Activated T-helper 1 cell treated with anti-CD3 and anti-CD28 coated beads, Interleukin-12 subunit alpha, Interleukin-12 subunit beta, Interleukin-2, Interleukin-4 antibody, amounts not matched to agents 30 ng/mL and 10 ng/mL and 1 ng/mL, durations not matched to agents 14 hours and 24 hours and 36 hours (primary cell): ENCODE measurements at regions of chr12 and their contacts with region 1.

Region 1: DNA sequence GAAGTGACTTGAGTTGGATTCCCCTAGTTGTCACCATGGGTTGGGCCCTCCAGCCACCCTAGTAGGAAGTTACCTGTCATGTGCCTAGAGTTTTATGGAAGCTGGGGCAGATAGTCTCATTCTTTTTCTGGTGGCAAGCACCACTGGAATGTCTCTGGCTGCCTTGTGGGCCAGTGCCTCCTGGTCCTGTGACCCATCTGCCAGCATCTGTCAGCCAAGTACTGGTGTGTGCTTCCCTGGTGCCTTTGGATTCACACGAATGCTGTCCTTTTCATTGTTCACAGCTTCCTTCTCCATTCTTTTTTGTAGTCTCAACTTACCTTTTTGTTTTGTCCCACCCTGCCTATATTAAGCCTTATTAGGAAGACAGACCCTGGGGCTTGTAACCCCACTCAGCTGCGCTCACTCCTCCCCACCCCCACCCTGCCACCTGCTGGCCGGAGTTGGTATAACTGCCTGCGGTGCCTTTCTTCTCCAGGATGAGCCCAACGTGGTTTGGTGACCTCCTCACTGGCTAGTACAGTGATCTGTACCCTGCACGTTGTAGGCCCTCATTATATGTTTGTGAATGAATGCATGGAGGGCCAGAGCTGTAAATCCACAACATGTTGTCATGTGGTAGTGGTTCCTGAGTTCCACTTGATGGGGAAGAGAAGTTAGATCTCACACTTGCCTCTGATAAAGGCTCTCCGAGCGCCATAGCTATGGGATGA is 125.7 kb downstream of the TSPAN9 start:
- DNase-seq: peak; percentile 11
- H3K4me3 Mint-ChIP-seq: no peak overlapping the region
- H3K27ac Mint-ChIP-seq: no peak overlapping the region
- H3K4me1 Mint-ChIP-seq: no peaks in the 10 kb centered on the region
- H3K27me3 Mint-ChIP-seq: peaks cover 31% of the 10 kb centered on the region

Region 2: DNA sequence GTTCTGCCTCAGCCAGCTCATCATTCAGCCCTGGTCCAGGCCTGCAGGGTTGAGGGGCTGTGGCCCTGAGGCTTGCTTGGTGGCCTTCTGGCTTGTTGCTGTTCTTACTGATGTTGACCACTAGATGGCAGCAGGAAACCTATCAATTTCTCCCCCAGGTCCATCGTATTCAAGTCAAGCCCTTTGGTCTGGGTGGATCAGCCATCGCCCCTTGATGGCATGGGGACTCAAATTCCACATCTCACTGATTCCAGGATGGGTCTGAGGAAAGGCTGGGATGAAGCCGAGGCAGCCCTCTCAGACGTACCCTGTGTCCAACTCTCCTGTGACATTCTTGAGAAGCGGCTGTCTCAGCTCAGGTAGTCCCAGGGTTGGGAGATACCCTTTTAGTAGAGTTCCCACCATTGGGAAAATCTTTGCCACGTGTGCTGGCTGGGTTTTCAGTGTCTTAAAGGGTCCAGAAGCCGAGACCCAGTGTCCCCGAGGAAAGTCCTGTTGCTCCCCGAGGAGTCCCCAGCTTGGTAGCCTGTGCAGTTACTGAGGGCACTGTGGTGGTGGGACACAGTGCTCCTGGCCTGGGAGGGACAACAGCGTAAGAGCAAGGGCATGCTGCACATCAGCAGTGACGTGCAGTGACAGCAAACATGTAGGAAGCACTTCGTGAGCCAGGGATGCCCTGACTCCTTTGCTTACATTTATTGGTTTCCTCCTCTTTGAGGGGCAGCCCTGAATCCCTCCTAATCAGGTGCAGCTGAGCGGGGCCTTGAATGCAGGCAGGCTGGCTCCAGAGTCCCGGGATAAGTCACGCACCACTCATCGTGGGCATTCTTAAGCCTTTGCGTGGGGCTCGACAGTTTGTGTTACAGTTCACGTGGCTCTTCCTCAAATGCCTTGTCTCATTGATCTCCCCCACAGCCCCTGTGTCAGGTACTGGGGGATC is 67.1 kb before region 1 on chr12:
- intact Hi-C with region 1: loop called (anchors 1 kb)
- DNase-seq: peak; percentile 15
- H3K4me3 Mint-ChIP-seq: no peak overlapping the region
- H3K27ac Mint-ChIP-seq: no peak overlapping the region
- H3K4me1 Mint-ChIP-seq: no peaks in the 10 kb centered on the region
- H3K27me3 Mint-ChIP-seq: peaks cover 29% of the 10 kb centered on the region

Region 3: GRCh38 chr12:3158851-3159465 is 43.9 kb before region 1 on chr12:
- intact Hi-C with region 1: no loop called
- DNase-seq: no peak
- H3K4me3 Mint-ChIP-seq: no peak overlapping the region
- H3K27ac Mint-ChIP-seq: no peak overlapping the region
- H3K4me1 Mint-ChIP-seq: no peaks in the 10 kb centered on the region
- H3K27me3 Mint-ChIP-seq: peaks cover 7% of the 10 kb centered on the region